Mammary epithelial cell (primary cell): ENCODE measurements at regions of chr3 and their contacts with region 1.

Region 1: DNA sequence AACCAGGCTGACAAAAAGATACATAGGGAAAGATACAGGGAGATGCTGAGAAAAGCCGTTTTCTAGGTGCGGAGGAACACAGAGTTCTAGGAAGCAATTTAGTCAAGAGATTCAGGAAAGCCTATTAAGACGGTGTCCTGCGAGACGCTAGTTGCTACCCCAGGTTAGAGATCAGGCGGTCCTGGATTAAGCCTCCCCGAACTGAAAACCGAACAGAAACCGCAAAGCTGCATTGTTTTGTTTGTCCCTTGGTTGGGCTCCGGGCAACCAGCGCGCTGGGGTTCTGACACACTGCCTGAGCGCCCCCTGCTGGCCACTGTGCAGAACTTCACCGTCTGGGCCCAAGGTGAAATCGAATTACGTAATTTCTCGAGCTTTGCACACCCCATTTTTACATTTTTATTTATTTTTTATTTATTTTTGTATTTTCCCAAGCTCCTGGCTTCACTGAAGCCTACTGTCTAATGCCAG is 37.3 kb upstream of the NDUFB4 start:
- DNase-seq: peak; percentile 76
- H3K4me3 ChIP-seq: peak overlapping the region; percentile 46 to 70 (median 62)
- H3K27ac ChIP-seq: peak overlapping the region; percentile 92
- H3K4me1 ChIP-seq: peaks cover 5% of the 10 kb centered on the region
- H3K27me3 ChIP-seq: no peaks in the 10 kb centered on the region
- CTCF ChIP-seq: peak; percentile 93 to 95

Region 2: GRCh38 chr3:120258009-120258408 is 300.8 kb before region 1 on chr3:
- CTCF ChIA-PET with region 1: no interaction called
- dilution Hi-C with region 1: no loop called
- in situ Hi-C with region 1: loop called in 1 of 2 experiments (anchors 10 kb)
- intact Hi-C with region 1: no loop called
- DNase-seq: no peak
- H3K4me3 ChIP-seq: no peak overlapping the region
- H3K27ac ChIP-seq: no peak overlapping the region
- H3K4me1 ChIP-seq: no peaks in the 10 kb centered on the region
- H3K27me3 ChIP-seq: no peaks in the 10 kb centered on the region
- CTCF ChIP-seq: no peak

Region 3: GRCh38 chr3:120417272-120417911 is 141.4 kb before region 1 on chr3:
- CTCF ChIA-PET with region 1: interaction called, 28 read pairs
- dilution Hi-C with region 1: no loop called
- in situ Hi-C with region 1: loop called in 1 of 2 experiments (anchors 10 kb)
- intact Hi-C with region 1: loop called (anchors 1 kb)
- DNase-seq: peak; percentile 95
- H3K4me3 ChIP-seq: peak overlapping the region; percentile 15 to 45 (median 39)
- H3K27ac ChIP-seq: peak overlapping the region; percentile 65
- H3K4me1 ChIP-seq: peaks cover 23% of the 10 kb centered on the region
- H3K27me3 ChIP-seq: no peaks in the 10 kb centered on the region
- CTCF ChIP-seq: peak; percentile 83 to 85

Region 4: DNA sequence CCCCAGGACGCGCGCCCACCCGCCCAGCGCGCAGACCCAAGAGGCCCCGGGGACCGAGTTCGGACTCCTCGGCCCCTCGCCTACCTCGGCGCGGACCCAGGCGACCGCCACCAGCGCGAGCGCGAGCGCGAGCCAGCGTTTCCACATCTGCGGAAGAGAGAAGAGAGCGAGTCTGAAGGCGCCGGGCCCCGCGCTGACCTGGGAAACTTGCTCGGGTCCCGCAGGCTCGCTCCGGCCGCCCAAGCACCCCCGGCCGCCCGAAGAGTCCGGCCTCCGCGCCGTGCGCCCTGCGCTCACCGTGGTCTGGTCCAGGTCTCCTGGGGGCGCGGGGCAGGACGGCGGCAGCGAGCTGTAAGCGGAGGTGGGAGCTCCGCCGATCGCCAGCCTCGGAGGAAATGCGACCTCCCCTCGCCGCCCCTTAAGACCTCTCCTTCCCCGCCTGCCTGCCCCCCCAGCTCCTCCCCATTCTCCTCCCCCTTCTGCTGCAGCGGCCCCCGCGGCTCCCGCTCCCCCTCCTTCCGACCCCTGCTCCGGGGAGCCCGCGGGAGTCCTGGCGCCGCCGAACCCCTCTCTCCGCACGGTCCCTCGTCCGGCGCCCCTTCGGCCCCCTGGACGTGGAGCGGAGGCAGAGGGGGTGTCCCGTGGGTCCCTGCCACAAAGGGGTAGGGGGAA is 108.1 kb before region 1 on chr3 and contains the start of gene FSTL1:
- CTCF ChIA-PET with region 1: interaction called, 3 read pairs
- dilution Hi-C with region 1: no loop called
- in situ Hi-C with region 1: no loop called
- intact Hi-C with region 1: loop called (anchors 1 kb)
- DNase-seq: peak; percentile 45
- H3K4me3 ChIP-seq: peak within 1 kb of the TSS; percentile 81 to 97 (median 81)
- H3K27ac ChIP-seq: peak within 1 kb of the TSS; percentile 63
- H3K4me1 ChIP-seq: peaks cover 19% of the 10 kb centered on the region
- H3K27me3 ChIP-seq: no peaks in the 10 kb centered on the region
- CTCF ChIP-seq: no peak
- total RNA-seq, gene FSTL1: 109 to 161 TPM

Region 5: DNA sequence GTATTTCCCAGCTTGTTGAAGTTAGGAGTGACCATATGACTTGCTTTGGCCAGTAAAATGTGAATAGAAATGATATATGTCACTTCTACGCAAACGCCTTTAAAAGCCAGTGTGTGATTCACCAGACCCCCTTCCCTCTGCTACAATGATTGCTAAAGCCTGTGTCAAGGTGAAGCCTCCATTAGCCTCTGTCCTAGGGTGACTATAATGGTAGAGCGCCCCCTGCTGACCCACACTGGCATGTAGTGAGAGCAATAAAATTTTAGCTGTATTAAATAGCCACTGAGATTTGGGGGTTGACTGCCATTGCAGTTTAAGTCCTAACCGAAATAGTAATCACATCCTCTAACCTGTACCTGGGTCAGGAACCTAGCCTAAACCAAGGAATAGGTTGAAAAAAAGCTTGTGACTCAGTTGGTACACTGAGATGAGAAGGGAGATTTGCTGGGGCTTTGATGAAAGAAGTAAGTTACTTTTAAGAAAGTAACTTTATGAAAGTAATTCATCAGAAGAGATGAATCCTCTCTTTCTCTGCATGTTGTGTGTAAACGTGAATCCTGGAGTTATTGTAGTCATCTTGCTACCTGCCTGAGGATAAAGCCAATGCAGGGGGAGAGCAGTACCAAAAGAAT is 236.3 kb after region 1 on chr3:
- CTCF ChIA-PET with region 1: interaction called, 3 read pairs
- dilution Hi-C with region 1: no loop called
- in situ Hi-C with region 1: loop called (anchors 5 kb)
- intact Hi-C with region 1: loop called (anchors 1 kb)
- DNase-seq: peak; percentile 50
- H3K4me3 ChIP-seq: no peak overlapping the region
- H3K27ac ChIP-seq: no peak overlapping the region
- H3K4me1 ChIP-seq: peaks cover 5% of the 10 kb centered on the region
- H3K27me3 ChIP-seq: peaks cover 4% of the 10 kb centered on the region
- CTCF ChIP-seq: peak; percentile 87